IMR-90 (cell line): ENCODE measurements at regions of chr4 and their contacts with region 1.

Region 1: GRCh38 chr4:119103263-119103662 is 32.4 kb upstream of the MYOZ2 start:
- DNase-seq: peak; percentile 99
- ATAC-seq: peak; percentile 73
- H3K4me3 ChIP-seq: no peak overlapping the region
- H3K27ac ChIP-seq: peak overlapping the region; percentile 95
- H3K4me1 ChIP-seq: peaks cover 13% of the 10 kb centered on the region; the same call in 1 of the 2 replicates
- H3K27me3 ChIP-seq: no peaks in the 10 kb centered on the region
- CTCF ChIP-seq: no peak
- POLR2A ChIP-seq: no peak
- RAD21 ChIP-seq: no peak

Region 2: GRCh38 chr4:119002476-119002875 is 100.8 kb before region 1 on chr4:
- CTCF ChIA-PET with region 1: no interaction called
- POLR2A ChIA-PET with region 1: no interaction called
- dilution Hi-C with region 1: no loop called
- in situ Hi-C with region 1: no loop called
- intact Hi-C with region 1: no loop called
- DNase-seq: no peak
- ATAC-seq: no peak
- H3K4me3 ChIP-seq: no peak overlapping the region
- H3K27ac ChIP-seq: no peak overlapping the region
- H3K4me1 ChIP-seq: peaks cover 11% of the 10 kb centered on the region
- H3K27me3 ChIP-seq: no peaks in the 10 kb centered on the region
- CTCF ChIP-seq: no peak
- POLR2A ChIP-seq: no peak
- RAD21 ChIP-seq: no peak

Region 3: DNA sequence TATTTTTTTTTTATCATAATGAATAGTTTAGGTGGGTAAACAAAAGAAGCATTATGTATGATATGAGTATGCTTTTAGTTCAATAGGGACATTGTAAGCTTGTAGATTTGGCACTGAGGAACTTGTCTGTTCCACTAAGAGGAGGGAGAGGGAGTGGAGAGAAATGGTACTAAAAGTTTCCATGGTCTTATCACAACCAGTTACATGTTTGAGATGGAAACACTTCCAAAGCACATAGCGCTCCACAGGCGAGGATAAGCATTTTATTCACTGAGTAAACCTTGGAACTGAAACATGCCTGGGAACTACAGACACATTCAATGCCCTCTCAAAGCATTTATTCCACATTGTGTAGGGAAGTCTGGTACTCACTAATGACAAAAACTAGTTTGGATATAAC is 47.9 kb after region 1 on chr4:
- CTCF ChIA-PET with region 1: no interaction called
- POLR2A ChIA-PET with region 1: no interaction called
- dilution Hi-C with region 1: no loop called
- in situ Hi-C with region 1: no loop called
- intact Hi-C with region 1: no loop called
- DNase-seq: no peak
- ATAC-seq: no peak
- H3K4me3 ChIP-seq: no peak overlapping the region
- H3K27ac ChIP-seq: no peak overlapping the region
- H3K4me1 ChIP-seq: no peaks in the 10 kb centered on the region
- H3K27me3 ChIP-seq: no peaks in the 10 kb centered on the region
- CTCF ChIP-seq: no peak
- POLR2A ChIP-seq: no peak
- RAD21 ChIP-seq: no peak

Region 4: GRCh38 chr4:119189638-119190037 is 86.4 kb after region 1 on chr4:
- CTCF ChIA-PET with region 1: no interaction called
- POLR2A ChIA-PET with region 1: interaction called, 12 read pairs
- dilution Hi-C with region 1: no loop called
- in situ Hi-C with region 1: no loop called
- intact Hi-C with region 1: no loop called
- DNase-seq: no peak
- ATAC-seq: no peak
- H3K4me3 ChIP-seq: no peak overlapping the region
- H3K27ac ChIP-seq: no peak overlapping the region
- H3K4me1 ChIP-seq: no peaks in the 10 kb centered on the region
- H3K27me3 ChIP-seq: no peaks in the 10 kb centered on the region
- CTCF ChIP-seq: no peak
- POLR2A ChIP-seq: no peak
- RAD21 ChIP-seq: no peak

Region 5: DNA sequence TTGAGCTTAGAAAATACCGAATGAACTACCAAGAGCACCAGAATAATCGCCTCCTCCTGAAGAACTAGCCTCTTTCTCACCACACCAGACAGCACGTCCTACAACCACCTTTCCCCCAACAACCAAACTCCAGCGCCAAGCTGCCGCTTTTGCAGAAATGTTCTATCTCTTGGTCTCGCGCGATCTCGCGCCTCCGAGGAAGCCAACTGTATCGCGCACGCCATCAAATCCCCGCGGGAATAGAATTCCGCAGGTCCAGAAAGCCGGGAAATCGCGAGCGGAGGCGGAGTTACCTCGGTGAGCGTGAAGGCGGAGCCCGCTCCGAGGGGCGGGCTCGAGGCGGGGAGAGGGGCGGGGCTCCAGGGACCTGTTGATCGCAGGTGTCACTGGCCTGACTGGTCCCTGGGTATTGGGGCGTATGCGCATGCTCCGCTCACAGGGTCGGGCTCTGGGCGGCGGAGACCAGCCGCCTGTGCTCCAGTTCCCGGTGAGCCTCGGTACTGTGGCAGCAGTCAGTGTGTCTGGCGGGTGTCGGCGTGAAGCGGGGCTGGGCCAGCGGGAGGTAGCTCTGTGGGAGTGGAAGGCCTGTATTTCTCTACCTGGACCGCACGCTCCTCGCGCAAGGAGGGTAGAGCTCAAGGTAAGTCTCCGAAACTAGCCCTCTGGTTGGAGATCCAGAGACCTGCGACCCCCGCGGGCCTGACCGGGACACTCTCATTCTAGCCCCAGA is 109.1 kb after region 1 on chr4 and contains the start of gene USP53:
- CTCF ChIA-PET with region 1: no interaction called
- POLR2A ChIA-PET with region 1: interaction called, 8 read pairs
- dilution Hi-C with region 1: no loop called
- in situ Hi-C with region 1: loop called (anchors 10 kb)
- intact Hi-C with region 1: loop called (anchors 2 kb)
- DNase-seq: peak; percentile 97
- ATAC-seq: peak; percentile 93
- H3K4me3 ChIP-seq: peak within 1 kb of the TSS; percentile 74
- H3K27ac ChIP-seq: peak within 1 kb of the TSS; percentile 90
- H3K4me1 ChIP-seq: peaks cover 3% of the 10 kb centered on the region; the same call in 1 of the 2 replicates
- H3K27me3 ChIP-seq: no peaks in the 10 kb centered on the region
- CTCF ChIP-seq: no peak
- POLR2A ChIP-seq: peak; percentile 97
- RAD21 ChIP-seq: peak; percentile 25
- total RNA-seq, gene USP53: 24.0 and 34.7 TPM in 2 replicates

Region 6: GRCh38 chr4:119659616-119660015 is 556.4 kb after region 1 on chr4:
- CTCF ChIA-PET with region 1: no interaction called
- POLR2A ChIA-PET with region 1: no interaction called
- dilution Hi-C with region 1: no loop called
- in situ Hi-C with region 1: no loop called
- intact Hi-C with region 1: no loop called
- DNase-seq: peak; percentile 94
- ATAC-seq: peak; percentile 58
- H3K4me3 ChIP-seq: no peak overlapping the region
- H3K27ac ChIP-seq: no peak overlapping the region; the same call in 1 of the 2 replicates
- H3K4me1 ChIP-seq: peaks cover 22% of the 10 kb centered on the region
- H3K27me3 ChIP-seq: no peaks in the 10 kb centered on the region
- CTCF ChIP-seq: no peak
- POLR2A ChIP-seq: no peak
- RAD21 ChIP-seq: no peak

Region 7: DNA sequence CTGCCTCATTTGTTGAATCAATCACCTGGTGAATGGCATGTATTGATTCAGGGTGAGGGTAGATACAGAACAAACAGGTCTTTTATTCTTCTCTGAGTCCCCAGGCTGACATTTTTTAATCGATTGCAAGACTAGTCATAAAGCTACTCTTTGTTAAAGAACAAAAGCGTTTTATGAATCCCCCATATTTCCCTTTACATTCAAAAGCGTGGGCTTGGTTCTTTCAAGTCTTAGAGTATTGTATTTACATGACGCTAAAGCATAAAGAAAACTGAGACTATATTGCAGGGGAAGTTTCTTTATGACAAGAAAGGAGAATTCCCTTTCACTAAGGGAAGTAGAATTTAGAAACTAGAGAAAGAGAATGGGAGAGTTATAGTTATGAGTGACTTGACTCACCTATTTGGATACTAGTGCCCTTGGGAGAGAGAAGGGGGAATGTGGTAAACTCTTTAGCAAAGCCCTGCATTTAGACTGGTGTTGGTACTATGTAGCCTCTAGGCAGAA is 594.7 kb after region 1 on chr4:
- CTCF ChIA-PET with region 1: no interaction called
- POLR2A ChIA-PET with region 1: no interaction called
- dilution Hi-C with region 1: no loop called
- in situ Hi-C with region 1: no loop called
- intact Hi-C with region 1: no loop called
- DNase-seq: no peak
- ATAC-seq: no peak
- H3K4me3 ChIP-seq: no peak overlapping the region
- H3K27ac ChIP-seq: no peak overlapping the region
- H3K4me1 ChIP-seq: peaks cover 3% of the 10 kb centered on the region
- H3K27me3 ChIP-seq: no peaks in the 10 kb centered on the region
- CTCF ChIP-seq: no peak
- POLR2A ChIP-seq: no peak
- RAD21 ChIP-seq: no peak